ENCODE measurements at regions of chr2 and their contacts with region 1.

Region 1: DNA sequence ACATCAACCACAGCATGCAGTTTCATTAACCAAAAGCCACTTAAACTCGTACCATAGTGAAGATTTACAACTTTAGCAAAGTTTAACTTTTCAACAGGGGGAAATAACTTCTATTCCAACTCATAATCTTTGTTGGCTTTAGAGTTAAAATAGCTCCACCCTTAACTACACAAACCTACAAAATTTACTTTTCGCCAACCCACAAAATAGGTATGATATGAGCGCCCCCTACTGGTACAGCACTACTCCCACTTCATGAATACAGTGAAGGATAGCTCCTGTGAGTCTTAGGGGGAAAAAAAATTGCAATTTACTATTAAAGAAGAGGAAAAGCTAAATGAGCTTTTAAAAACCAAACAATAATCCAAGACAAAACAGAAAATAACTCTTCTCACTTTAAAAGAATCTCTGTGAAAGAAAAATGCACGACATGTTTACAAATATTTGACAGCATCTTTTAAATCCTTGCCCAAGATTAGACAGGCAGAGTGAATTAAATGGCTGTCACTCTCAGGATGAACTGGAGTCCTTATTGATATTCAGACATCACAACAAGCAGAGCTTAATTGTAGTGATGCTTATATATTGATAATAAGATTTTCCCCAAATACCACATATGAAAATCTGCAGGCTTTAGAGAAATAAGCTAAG is 32.2 kb downstream of the TMEFF2 start:
- DNase-seq: peak; percentile 2
- CTCF ChIP-seq: peak; percentile 81

Region 2: DNA sequence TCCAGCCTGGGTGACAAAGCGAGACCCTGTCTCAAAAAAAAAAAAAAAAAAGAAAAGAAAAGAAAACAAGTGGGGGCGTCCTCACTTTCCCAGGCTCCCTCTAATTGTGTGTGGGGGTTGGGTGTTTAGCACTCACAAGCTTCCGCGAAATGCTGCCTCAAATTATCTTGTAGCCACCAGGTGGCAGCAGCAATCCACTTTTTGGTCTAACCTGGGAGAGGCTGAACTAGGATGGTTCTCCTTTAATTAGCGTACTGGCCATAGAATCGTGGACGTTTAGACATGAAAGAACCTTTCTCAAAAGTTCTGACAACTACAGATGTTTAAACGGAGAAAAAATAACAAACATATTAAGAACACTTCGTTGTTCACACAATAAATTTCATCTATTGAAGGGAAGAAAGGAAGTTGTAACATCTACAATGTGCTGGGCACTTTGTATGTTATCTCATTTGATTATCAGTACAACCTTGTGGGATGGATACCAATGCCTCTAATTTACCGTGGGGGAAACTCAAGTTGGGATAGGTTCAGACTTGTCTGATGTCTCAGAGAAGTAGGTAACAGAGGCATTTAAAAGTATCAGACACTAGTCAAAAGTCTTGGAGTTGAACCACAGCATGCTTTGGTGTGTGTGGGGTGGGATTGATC is 607.3 kb before region 1 on chr2:
- in situ Hi-C with region 1: loop called (anchors 10 kb)
- DNase-seq: peak; percentile 72
- CTCF ChIP-seq: peak; percentile 71

Region 3: DNA sequence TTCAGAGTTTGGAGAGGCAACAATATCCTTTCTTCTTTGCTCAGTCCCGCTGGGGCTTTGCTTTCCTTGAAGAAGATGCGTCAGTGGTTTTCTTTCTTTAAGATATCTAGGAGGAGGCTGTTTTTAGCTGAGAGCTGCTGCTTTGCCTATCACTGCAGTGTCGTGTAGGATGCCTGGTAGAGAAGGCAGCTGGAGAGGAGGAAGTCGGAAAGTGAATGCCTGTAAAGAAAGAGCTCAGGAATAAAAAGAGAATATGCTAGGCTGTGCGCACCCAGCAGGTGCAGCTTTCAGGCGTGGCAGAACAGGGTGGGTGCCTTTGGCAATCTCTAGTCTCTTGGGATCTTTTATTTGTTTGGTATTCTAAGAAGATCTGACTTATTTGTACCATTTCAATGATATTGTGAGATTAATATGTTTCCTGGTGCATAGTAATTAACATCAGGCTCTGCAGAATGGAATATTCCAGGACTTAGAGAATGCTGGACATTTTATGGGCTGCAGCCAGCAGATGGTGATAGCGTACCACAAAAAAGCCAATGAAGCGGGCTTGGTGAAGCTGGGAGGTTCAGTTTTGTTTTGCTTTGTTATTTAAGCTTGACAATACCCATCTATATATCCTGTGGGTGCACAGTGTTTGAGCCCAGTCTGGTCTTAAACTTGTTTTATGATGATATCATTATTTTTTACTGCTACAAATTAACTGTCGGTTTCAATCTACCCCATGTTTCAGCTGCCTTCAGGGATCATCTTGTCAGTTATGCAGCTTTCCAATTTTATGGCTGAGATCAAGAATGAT is 350.5 kb before region 1 on chr2:
- in situ Hi-C with region 1: loop called (anchors 5 kb)
- DNase-seq: peak; percentile 30
- CTCF ChIP-seq: peak; percentile 63

Region 4: DNA sequence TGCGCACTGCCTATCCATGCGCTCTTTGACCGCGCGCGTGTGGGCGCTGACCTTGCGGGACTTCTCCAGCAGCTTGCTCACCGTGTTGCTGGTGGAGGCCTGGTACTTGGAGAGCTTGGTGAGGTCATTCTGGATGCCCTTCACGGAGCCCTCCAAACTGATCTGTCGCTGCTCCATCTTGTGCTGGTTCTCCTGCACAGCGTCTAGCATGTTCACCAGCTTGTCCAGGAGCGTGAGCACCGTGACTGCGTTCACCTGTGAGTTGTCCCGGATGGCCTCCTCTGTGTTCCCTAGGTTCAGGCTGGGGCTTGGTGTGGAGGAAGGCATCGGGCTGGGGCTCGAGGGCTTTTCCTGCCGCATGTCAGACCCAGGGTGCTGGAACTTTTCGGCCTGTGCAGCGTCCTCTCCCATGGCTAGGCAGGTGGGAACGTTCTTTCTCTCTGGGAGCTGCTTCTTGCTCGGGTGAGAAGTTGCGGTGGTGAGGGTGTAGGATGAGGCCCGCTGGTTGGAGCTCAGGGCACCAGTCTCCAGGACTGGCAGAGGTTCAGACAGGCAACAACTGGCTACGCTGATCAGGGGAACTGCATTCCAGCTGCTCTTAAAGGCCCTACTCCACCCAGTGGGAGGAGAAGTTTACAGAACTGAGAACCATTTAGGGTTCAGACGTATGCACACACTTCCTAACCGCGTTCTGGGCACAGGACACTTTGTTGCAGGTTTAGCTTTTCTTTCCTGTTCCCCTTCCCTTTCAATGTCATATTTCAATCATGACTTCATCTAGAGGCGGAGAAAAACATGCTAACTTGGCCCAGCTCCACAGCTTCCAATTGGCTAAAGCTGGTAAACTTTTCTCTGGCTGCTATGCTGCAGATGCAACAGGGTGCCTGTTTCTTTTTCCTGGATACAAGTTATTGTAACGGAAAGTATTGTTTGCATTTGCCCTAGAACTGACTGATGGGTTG is 315.7 kb before region 1 on chr2 and contains the start of gene CAVIN2:
- in situ Hi-C with region 1: no loop called
- DNase-seq: no peak
- CTCF ChIP-seq: no peak

Region 5: GRCh38 chr2:191959209-191959608 is 203.3 kb before region 1 on chr2:
- in situ Hi-C with region 1: no loop called
- DNase-seq: no peak
- CTCF ChIP-seq: no peak

Region 6: GRCh38 chr2:192098814-192099491 is 63.6 kb before region 1 on chr2:
- in situ Hi-C with region 1: no loop called
- DNase-seq: no peak
- CTCF ChIP-seq: no peak

Measured in GM13976 (cell line).